ENCODE measurements at regions of chr2 and their contacts with region 1.

Region 1: GRCh38 chr2:102355526-102356380 is at the start of gene IL18R1:
- DNase-seq: peak; percentile 68 to 85
- ATAC-seq: peak; percentile 98 to 99 (median 99)
- H3K4me3 ChIP-seq: peak within 1 kb of the TSS; percentile 41 to 88 (median 79)
- H3K27ac ChIP-seq: peak within 1 kb of the TSS in 9 of 10 donors; percentile 53 to 93 (median 74)
- H3K4me1 ChIP-seq: peaks cover 0 to 40% (median 5%) of the 10 kb centered on the region in 9 donors
- H3K27me3 ChIP-seq: peaks cover 0 to 7% (median 0%) of the 10 kb centered on the region in 7 donors
- CTCF ChIP-seq: peak; percentile 62 to 95 (median 86)
- total RNA-seq, gene IL18R1: 0.06 to 4.9 (median 1.1) TPM

Region 2: DNA sequence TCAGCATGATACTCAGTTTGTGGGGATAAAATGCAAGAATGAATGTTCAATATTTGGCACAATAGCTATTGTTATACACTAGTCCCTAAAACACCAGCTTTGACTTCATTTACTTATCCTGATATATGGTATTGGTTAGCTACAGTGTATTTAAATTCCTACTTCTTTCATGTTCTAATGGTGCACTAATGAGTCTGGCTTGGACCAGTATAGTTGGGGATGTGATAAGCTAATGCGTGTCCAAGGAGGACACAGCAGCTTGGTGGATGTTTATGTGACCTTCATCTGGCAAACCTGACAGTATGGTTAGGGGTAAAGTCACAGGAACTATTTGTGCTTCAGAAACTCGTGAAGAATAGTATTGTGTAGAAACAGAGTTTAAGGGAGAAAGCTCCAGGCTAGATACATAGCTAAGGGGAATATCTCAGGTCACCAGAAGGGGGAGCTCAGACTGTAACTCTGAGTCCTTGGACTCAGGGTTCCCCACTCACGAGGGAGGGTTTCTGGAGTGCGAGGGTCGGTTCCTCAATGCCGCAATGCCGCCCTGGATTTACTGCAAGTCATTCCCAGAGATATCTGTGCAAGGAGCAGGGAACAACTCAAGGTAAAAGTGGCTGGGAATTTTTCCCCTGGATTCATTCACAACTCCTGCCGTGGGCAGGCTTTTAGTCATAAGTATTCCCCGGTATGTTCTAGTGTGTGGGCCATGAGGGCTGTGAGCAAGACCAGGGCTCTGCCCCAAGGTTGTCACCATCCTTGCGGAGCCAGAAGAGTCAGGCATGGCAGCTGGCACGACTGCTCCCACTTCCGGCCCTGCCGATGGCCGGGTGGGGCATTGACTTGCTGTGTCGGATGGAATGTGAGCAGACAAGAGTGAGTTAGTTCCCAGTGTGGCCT is 349.5 kb before region 1 on chr2:
- intact Hi-C with region 1: loop called in 4 of 10 experiments (anchors 5 to 10 kb)
- DNase-seq: peak in 1 of 2 donors; percentile 51
- ATAC-seq: peak; percentile 39 to 82 (median 72)
- H3K4me3 ChIP-seq: no peak overlapping the region
- H3K27ac ChIP-seq: peak overlapping the region in 1 of 10 donors; percentile 15
- H3K4me1 ChIP-seq: peaks cover 0 to 39% (median 4%) of the 10 kb centered on the region in 9 donors
- H3K27me3 ChIP-seq: no peaks in the 10 kb centered on the region
- CTCF ChIP-seq: peak; percentile 36 to 77 (median 68)

Region 3: GRCh38 chr2:102166189-102166845 is 189.4 kb before region 1 on chr2:
- intact Hi-C with region 1: loop called in 1 of 10 experiments (anchors 10 kb)
- DNase-seq: peak in 1 of 2 donors; percentile 35
- ATAC-seq: peak; percentile 73 to 95 (median 86)
- H3K4me3 ChIP-seq: no peak overlapping the region
- H3K27ac ChIP-seq: peak overlapping the region in 2 of 10 donors; percentile 5 to 15
- H3K4me1 ChIP-seq: peaks cover 0 to 14% (median 6%) of the 10 kb centered on the region in 9 donors
- H3K27me3 ChIP-seq: no peaks in the 10 kb centered on the region
- CTCF ChIP-seq: peak; percentile 41 to 83 (median 66)

Region 4: GRCh38 chr2:102251042-102251848 is 104.5 kb before region 1 on chr2:
- intact Hi-C with region 1: loop called in 6 of 10 experiments (anchors 2 to 10 kb)
- DNase-seq: peak in 1 of 2 donors; percentile 72
- ATAC-seq: peak; percentile 73 to 86 (median 81)
- H3K4me3 ChIP-seq: peak overlapping the region; percentile 12 to 62 (median 48)
- H3K27ac ChIP-seq: peak overlapping the region in 5 of 10 donors; percentile 7 to 64 (median 42)
- H3K4me1 ChIP-seq: peaks cover 3 to 30% (median 9%) of the 10 kb centered on the region in 9 donors
- H3K27me3 ChIP-seq: peaks cover 0 to 40% (median 13%) of the 10 kb centered on the region in 7 donors
- CTCF ChIP-seq: peak; percentile 21 to 78 (median 69)

Region 5: GRCh38 chr2:102301867-102302362 is 53.8 kb before region 1 on chr2:
- intact Hi-C with region 1: loop called in 2 of 10 experiments (anchors 2 to 10 kb)
- DNase-seq: peak in 1 of 2 donors; percentile 18
- ATAC-seq: peak; percentile 38 to 74 (median 54)
- H3K4me3 ChIP-seq: no peak overlapping the region
- H3K27ac ChIP-seq: no peak overlapping the region
- H3K4me1 ChIP-seq: peaks cover 0 to 22% (median 0%) of the 10 kb centered on the region in 9 donors
- H3K27me3 ChIP-seq: peaks cover 0 to 85% (median 10%) of the 10 kb centered on the region in 7 donors
- CTCF ChIP-seq: peak in 4 of 9 donors; percentile 28 to 55 (median 37)

Region 6: GRCh38 chr2:102449370-102449974 is 93.7 kb after region 1 on chr2:
- intact Hi-C with region 1: loop called in 6 of 10 experiments (anchors 5 to 10 kb)
- DNase-seq: peak; percentile 13 to 17
- ATAC-seq: no peak
- H3K4me3 ChIP-seq: no peak overlapping the region
- H3K27ac ChIP-seq: no peak overlapping the region
- H3K4me1 ChIP-seq: no peaks in the 10 kb centered on the region
- H3K27me3 ChIP-seq: no peaks in the 10 kb centered on the region
- CTCF ChIP-seq: peak in 8 of 9 donors; percentile 27 to 77 (median 68)

Measured in heart right ventricle (tissue), 16 donors.